Adrenal gland (tissue), 19 donors: ENCODE measurements at regions of chr17 and their contacts with region 1.

Region 1: DNA sequence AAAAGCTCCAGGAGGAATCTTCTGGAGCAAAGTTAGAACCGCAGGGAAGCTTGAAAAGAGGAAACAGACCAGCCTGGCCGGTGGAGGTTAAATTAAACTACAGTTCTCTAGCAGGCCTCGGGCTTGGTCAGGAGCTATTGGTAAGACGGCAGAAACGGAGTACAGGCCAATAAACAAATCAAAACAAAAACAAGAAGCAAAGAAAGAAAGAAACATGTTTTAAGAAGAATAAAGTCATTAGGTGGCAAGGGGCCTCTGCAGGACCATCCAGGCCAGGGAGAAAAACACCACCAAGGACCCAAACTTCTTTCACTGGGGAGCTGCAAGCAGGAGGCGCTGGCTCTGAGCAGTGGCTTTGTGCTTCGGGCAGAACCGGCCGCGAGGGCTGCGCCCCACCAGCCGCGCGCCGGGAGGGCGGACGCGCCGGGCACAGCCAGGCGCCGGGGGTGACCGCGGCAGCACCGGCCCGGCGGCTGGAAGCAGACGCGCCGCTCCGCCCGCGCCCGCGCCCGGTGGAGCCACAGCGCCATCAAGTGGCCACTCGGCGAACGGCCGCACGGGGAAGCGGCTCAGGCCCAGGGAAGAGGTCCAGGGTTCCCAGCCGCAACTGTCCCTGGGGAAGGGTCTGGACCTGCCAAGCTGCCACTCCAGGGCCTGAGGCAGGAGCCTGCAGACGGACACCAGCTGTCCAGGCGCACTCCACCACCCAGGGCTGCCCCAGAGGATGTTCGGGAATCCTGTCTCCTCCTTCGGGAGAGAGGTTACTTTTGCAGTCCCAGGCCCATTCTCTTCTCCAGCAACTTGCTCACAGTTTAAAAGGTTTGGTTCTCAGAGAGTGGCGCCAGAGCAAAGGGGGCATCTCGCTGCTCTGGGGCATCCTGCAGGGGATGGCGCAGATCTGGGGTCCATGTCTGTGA is 419.4 kb downstream of the SOX9 start:
- DNase-seq: peak; percentile 36 to 79 (median 56)
- H3K4me3 ChIP-seq: no peak overlapping the region
- H3K27ac ChIP-seq: no peak overlapping the region
- H3K4me1 ChIP-seq: no peaks in the 10 kb centered on the region
- H3K27me3 ChIP-seq: no peaks in the 10 kb centered on the region
- CTCF ChIP-seq: peak; percentile 55 to 99 (median 80)
- POLR2A ChIP-seq: no peak

Region 2: DNA sequence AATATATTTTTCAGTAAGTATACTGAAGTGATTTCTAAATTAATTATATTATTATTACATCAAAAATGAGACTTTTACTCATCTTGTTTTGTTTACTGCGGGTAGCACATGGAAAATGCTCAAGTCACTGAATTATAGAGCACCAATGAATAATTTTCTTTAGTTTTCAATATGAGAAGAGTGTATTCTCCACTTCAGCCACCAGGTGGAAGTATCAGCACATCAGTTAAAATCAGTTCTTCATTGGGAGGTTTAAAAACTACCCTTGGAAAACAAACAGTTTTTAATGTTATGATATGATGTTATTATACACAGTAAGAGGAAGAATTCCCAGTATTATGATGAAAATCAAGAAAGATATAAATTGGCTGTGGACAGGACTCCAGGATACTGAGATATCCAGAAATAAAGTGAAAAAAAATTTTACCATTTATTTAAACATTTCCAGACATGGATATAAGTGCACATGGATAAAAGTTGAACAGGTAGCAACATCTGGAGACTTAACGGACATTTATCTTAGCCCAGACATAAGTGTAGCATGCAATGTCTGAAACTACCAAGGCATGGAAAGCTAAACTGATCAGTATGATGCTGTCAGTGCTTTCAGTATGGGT is 1903.6 kb before region 1 on chr17:
- intact Hi-C with region 1: loop called in 1 of 2 experiments (anchors 5 kb)
- DNase-seq: peak in 3 of 7 donors; percentile 19 to 26 (median 19)
- H3K4me3 ChIP-seq: no peak overlapping the region
- H3K27ac ChIP-seq: no peak overlapping the region
- H3K4me1 ChIP-seq: no peaks in the 10 kb centered on the region
- H3K27me3 ChIP-seq: no peaks in the 10 kb centered on the region
- CTCF ChIP-seq: peak; percentile 68 to 85 (median 72)
- POLR2A ChIP-seq: no peak

Region 3: GRCh38 chr17:70767102-70767701 is 1773.0 kb before region 1 on chr17:
- intact Hi-C with region 1: loop called in 1 of 2 experiments (anchors 5 kb)
- DNase-seq: no peak
- H3K4me3 ChIP-seq: no peak overlapping the region
- H3K27ac ChIP-seq: no peak overlapping the region
- H3K4me1 ChIP-seq: no peaks in the 10 kb centered on the region
- H3K27me3 ChIP-seq: no peaks in the 10 kb centered on the region
- CTCF ChIP-seq: peak; percentile 51 to 68 (median 62)
- POLR2A ChIP-seq: no peak

Region 4: GRCh38 chr17:71472809-71473789 is 1067.1 kb before region 1 on chr17:
- intact Hi-C with region 1: loop called in 1 of 2 experiments (anchors 10 kb)
- DNase-seq: peak in 4 of 7 donors; percentile 13 to 20 (median 16)
- H3K4me3 ChIP-seq: no peak overlapping the region
- H3K27ac ChIP-seq: no peak overlapping the region
- H3K4me1 ChIP-seq: no peaks in the 10 kb centered on the region
- H3K27me3 ChIP-seq: peaks cover 4% of the 10 kb centered on the region
- CTCF ChIP-seq: peak; percentile 32 to 60 (median 46)
- POLR2A ChIP-seq: no peak